ENCODE measurements at regions of chr13 and their contacts with region 1.

Region 1: GRCh38 chr13:40682449-40683240 is 16.2 kb upstream of the FOXO1 start:
- DNase-seq: no peak
- ATAC-seq: no peak
- H3K4me3 Mint-ChIP-seq: no peak overlapping the region
- H3K27ac Mint-ChIP-seq: peak overlapping the region; percentile 14
- H3K4me1 Mint-ChIP-seq: peaks cover 7% of the 10 kb centered on the region
- H3K27me3 Mint-ChIP-seq: no peaks in the 10 kb centered on the region

Region 2: GRCh38 chr13:39684531-39685137 is 998.0 kb before region 1 on chr13:
- CTCF ChIA-PET with region 1: interaction called, 23 read pairs
- POLR2A ChIA-PET with region 1: no interaction called
- DNase-seq: no peak
- ATAC-seq: no peak
- H3K4me3 Mint-ChIP-seq: no peak overlapping the region
- H3K27ac Mint-ChIP-seq: no peak overlapping the region
- H3K4me1 Mint-ChIP-seq: peaks cover 22% of the 10 kb centered on the region
- H3K27me3 Mint-ChIP-seq: no peaks in the 10 kb centered on the region

Region 3: GRCh38 chr13:40069173-40070044 is 613.2 kb before region 1 on chr13:
- CTCF ChIA-PET with region 1: interaction called, 15 read pairs
- POLR2A ChIA-PET with region 1: no interaction called
- DNase-seq: peak; percentile 77
- ATAC-seq: peak; percentile 90
- H3K4me3 Mint-ChIP-seq: no peak overlapping the region
- H3K27ac Mint-ChIP-seq: no peak overlapping the region
- H3K4me1 Mint-ChIP-seq: peaks cover 25% of the 10 kb centered on the region
- H3K27me3 Mint-ChIP-seq: no peaks in the 10 kb centered on the region

Region 4: GRCh38 chr13:40671956-40672764 is 10.5 kb before region 1 on chr13:
- CTCF ChIA-PET with region 1: interaction called, 27 read pairs
- POLR2A ChIA-PET with region 1: no interaction called
- DNase-seq: no peak
- ATAC-seq: no peak
- H3K4me3 Mint-ChIP-seq: no peak overlapping the region
- H3K27ac Mint-ChIP-seq: no peak overlapping the region
- H3K4me1 Mint-ChIP-seq: peaks cover 33% of the 10 kb centered on the region
- H3K27me3 Mint-ChIP-seq: no peaks in the 10 kb centered on the region

Region 5: DNA sequence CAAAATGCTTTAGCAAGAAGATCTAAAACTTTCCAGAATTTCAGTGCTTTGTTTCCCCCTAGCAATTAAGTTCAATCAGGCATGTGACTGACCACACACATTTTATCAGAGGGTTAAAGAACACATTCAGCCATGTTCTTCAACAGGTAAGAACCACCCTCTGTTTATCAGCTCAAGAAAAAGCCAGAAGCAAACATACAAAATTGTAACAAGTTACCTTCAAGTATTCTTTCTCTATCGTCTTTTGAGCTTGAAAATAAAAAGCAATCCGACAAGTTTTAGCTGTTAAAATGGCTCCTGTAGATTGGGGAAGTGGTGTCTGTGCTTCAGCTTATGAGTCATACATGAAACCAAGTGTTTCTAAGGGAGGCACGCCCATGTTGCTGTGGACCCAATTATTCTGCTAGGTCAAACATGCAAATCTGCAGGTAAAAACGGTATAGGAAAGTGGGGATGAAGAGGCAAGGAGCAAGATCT is 336.4 kb after region 1 on chr13 and contains the start of gene ELF1:
- CTCF ChIA-PET with region 1: no interaction called
- POLR2A ChIA-PET with region 1: no interaction called
- DNase-seq: peak; percentile 78
- ATAC-seq: peak; percentile 91
- H3K4me3 Mint-ChIP-seq: peak within 1 kb of the TSS; percentile 89
- H3K27ac Mint-ChIP-seq: peak within 1 kb of the TSS; percentile 99
- H3K4me1 Mint-ChIP-seq: peaks cover 42% of the 10 kb centered on the region
- H3K27me3 Mint-ChIP-seq: no peaks in the 10 kb centered on the region
- total RNA-seq, gene ELF1: 106 to 107 TPM

Measured in activated CD8-positive, alpha-beta T cell treated with anti-CD3 and anti-CD28 coated beads, Interleukin-2, amount 10 ng/mL, durations not matched to agents 7 days and 5 days (primary cell).